ENCODE measurements at regions of chr1 and their contacts with region 1.

Region 1: GRCh38 chr1:7752512-7753417 is 18.3 kb upstream of the VAMP3 start:
- DNase-seq: peak; percentile 71
- ATAC-seq: peak; percentile 88
- H3K4me3 ChIP-seq: peak overlapping the region; percentile 83
- H3K27ac ChIP-seq: no peak overlapping the region
- H3K4me1 ChIP-seq: peaks cover 6% of the 10 kb centered on the region; the same call in 1 of the 2 replicates
- H3K27me3 ChIP-seq: peaks cover 20% of the 10 kb centered on the region
- CTCF ChIP-seq: peak; percentile 84
- POLR2A ChIP-seq: no peak
- RAD21 ChIP-seq: peak; percentile 80

Region 2: DNA sequence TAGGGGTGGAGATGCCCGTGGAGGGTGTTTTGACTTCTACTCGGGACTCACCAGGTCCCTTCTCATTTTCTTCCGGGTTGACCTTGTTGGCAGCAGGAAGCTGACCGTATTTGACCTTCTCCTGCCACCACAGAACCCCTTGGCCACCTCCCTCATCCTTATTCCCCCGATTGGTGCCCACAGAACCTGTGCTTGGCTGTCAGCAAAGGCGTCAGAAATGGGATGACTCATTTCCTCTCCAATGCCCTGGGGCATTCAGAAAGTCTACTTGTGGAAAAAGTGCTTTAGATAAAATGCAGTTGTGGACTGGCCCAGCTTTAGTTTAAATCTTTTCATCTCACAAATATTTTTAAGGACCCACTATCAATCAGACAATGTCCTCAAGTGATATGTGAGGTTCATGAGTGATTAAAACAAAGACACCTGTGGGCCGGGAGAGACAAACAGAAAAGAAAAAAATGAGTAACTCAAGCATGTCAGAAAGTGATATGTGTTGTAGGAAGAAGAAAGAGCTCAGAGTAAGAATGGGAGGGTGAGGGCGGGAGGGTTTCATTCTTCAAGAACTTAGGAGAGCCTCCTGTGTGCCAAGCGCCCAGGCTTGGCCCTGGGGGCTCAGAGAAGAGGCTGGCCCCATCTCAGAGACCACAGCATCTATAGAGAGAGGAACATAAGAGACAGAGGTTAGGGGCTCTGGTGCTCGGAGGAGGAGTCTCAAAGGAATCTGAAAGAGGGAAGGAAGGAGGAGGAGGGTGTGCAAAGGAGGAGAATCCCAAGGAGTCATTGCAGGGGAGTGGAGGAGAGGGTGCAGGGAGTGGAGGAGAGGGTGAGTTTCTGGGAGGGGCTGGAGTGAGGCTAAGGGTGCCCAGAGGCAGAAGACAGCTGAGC is 203.2 kb before region 1 on chr1:
- CTCF ChIA-PET with region 1: no interaction called
- POLR2A ChIA-PET with region 1: no interaction called
- dilution Hi-C with region 1: no loop called
- in situ Hi-C with region 1: no loop called
- intact Hi-C with region 1: no loop called
- DNase-seq: peak; percentile 87
- ATAC-seq: peak; percentile 78
- H3K4me3 ChIP-seq: no peak overlapping the region
- H3K27ac ChIP-seq: no peak overlapping the region
- H3K4me1 ChIP-seq: peaks cover 6% of the 10 kb centered on the region
- H3K27me3 ChIP-seq: no peaks in the 10 kb centered on the region; the same call in 1 of the 2 replicates
- CTCF ChIP-seq: no peak
- POLR2A ChIP-seq: peak; percentile 45
- RAD21 ChIP-seq: no peak

Region 3: GRCh38 chr1:7675431-7676273 is 77.1 kb before region 1 on chr1:
- CTCF ChIA-PET with region 1: interaction called, 108 read pairs
- POLR2A ChIA-PET with region 1: no interaction called
- dilution Hi-C with region 1: no loop called
- in situ Hi-C with region 1: no loop called
- intact Hi-C with region 1: no loop called
- DNase-seq: no peak
- ATAC-seq: no peak
- H3K4me3 ChIP-seq: no peak overlapping the region
- H3K27ac ChIP-seq: no peak overlapping the region
- H3K4me1 ChIP-seq: no peaks in the 10 kb centered on the region
- H3K27me3 ChIP-seq: peaks cover 52% of the 10 kb centered on the region
- CTCF ChIP-seq: no peak
- POLR2A ChIP-seq: no peak
- RAD21 ChIP-seq: no peak

Measured in IMR-90 (cell line).